ENCODE measurements at regions of chr5 and their contacts with region 1.

Region 1: DNA sequence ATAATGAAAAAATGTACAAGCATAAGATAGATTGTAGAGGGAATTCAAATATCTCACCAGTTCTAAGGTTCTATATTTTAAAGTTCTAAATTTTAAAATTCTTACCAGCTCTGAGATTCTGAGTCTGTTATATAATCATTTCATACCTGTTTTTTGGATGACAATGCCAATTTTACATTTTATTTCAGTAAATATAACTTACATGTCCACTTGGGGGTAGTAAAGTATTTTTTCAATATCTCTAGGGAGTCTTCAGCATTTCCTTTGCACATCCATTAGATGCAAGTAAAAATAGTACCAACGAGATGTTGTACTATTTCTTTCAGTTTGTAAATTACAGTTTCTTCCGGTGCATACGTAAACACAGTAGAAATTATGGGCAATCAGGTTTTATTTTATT is 25.7 kb downstream of the NMUR2 start:
- DNase-seq: no peak
- ATAC-seq: no peak

Region 2: GRCh38 chr5:152271420-152271819 is 107.9 kb before region 1 on chr5:
- intact Hi-C with region 1: no loop called
- DNase-seq: no peak
- ATAC-seq: peak; percentile 76

Region 3: GRCh38 chr5:152462021-152462721 is 82.8 kb after region 1 on chr5:
- intact Hi-C with region 1: loop called (anchors 10 kb)
- DNase-seq: no peak
- ATAC-seq: no peak

Measured in Right ventricle myocardium inferior (tissue), 1 donor.